Heart right ventricle (tissue), 16 donors: ENCODE measurements at regions of chr11 and their contacts with region 1.

Region 1: GRCh38 chr11:123719452-123719851 is 22.0 kb downstream of the ZNF202 start:
- DNase-seq: no peak
- ATAC-seq: no peak
- H3K4me3 ChIP-seq: no peak overlapping the region
- H3K27ac ChIP-seq: no peak overlapping the region
- H3K4me1 ChIP-seq: no peaks in the 10 kb centered on the region
- H3K27me3 ChIP-seq: no peaks in the 10 kb centered on the region
- CTCF ChIP-seq: no peak

Region 2: DNA sequence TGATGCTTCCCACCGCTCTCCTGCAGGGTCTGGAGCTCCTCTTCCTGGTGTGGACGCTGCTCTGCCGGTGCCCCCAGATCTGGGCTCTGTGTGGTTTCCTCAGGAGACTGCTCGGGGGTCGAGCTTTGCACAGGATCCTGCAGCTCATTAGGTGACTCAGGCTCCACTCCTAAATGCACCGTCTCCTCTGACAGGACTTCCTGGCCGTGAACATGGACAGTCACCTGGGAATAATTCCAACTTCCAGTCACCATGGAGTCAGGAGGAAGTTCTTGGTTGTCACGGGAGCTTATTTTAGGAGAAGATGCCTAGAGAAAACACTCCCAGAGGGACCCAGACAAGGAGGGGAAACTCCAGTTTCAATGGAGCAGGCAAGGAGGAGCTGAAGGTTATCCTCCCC is 10.2 kb after region 1 on chr11:
- intact Hi-C with region 1: loop called in 1 of 10 experiments (anchors 1 kb)
- DNase-seq: no peak
- ATAC-seq: peak in 2 of 8 donors; percentile 13 to 21
- H3K4me3 ChIP-seq: no peak overlapping the region
- H3K27ac ChIP-seq: no peak overlapping the region
- H3K4me1 ChIP-seq: no peaks in the 10 kb centered on the region
- H3K27me3 ChIP-seq: no peaks in the 10 kb centered on the region
- CTCF ChIP-seq: no peak

Region 3: DNA sequence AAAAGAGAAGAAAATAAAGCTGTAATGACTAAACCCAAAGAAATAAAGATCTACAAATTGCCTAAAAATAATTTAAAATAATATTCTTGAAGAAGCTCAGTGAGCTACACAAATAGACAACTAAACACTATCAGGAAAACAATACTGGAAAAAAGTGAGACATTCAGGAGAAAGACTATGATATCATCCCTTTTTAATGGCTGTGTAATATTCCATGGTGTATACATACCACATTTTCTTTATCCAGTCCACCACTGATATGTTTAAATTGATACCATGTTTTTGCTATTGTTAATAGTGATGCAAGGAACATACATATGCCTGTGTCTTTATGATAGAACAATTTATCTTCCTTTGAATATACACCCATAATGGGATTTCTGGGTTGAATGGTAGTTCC is 237.3 kb after region 1 on chr11:
- intact Hi-C with region 1: no loop called
- DNase-seq: no peak
- ATAC-seq: no peak
- H3K4me3 ChIP-seq: no peak overlapping the region
- H3K27ac ChIP-seq: no peak overlapping the region
- H3K4me1 ChIP-seq: no peaks in the 10 kb centered on the region
- H3K27me3 ChIP-seq: no peaks in the 10 kb centered on the region
- CTCF ChIP-seq: no peak